ENCODE measurements at regions of chr11 and their contacts with region 1.

Region 1: GRCh38 chr11:6682936-6683861 is at the start of gene MRPL17:
- DNase-seq: peak; percentile 94
- ATAC-seq: peak; percentile 95
- H3K4me3 Mint-ChIP-seq: peak within 1 kb of the TSS; percentile 99
- H3K27ac Mint-ChIP-seq: peak within 1 kb of the TSS; percentile 98
- H3K4me1 Mint-ChIP-seq: peaks cover 24% of the 10 kb centered on the region
- H3K27me3 Mint-ChIP-seq: no peaks in the 10 kb centered on the region
- CTCF ChIP-seq: peak; percentile 73
- total RNA-seq, gene MRPL17: 34.1 and 34.2 TPM in 2 replicates

Region 2: GRCh38 chr11:6389921-6390724 is 293.1 kb before region 1 on chr11 and contains the start of gene SMPD1:
- CTCF ChIA-PET with region 1: no interaction called
- POLR2A ChIA-PET with region 1: interaction called, 11 read pairs
- intact Hi-C with region 1: loop called (anchors 1 kb)
- DNase-seq: peak; percentile 86
- ATAC-seq: peak; percentile 93
- H3K4me3 Mint-ChIP-seq: peak within 1 kb of the TSS; percentile 95
- H3K27ac Mint-ChIP-seq: peak within 1 kb of the TSS; percentile 99
- H3K4me1 Mint-ChIP-seq: peaks cover 36% of the 10 kb centered on the region
- H3K27me3 Mint-ChIP-seq: no peaks in the 10 kb centered on the region
- CTCF ChIP-seq: no peak
- total RNA-seq, gene SMPD1: 14.1 and 16.9 TPM in 2 replicates

Region 3: DNA sequence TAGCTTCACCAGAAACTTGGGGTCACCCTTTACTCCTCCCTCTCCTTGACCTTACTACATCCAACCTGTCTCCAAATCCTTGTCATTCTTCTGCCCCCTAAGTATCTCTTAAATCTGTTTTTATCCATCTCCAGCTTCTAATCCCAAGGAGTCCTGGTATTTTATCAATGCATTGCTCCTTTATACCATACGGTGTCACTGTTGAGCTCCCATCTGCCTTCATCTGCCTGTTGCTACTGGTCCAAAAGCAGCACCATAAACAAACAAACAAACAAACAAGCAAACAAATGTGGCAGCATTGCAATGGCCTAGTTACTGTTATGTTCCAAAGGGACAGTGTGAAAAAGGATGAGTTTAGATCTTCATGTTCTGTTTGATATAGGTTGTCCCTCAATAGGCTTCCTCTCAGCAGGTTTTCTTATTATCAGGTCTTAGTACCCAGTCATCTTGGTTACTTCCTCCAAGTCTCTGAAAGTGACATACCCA is 151.9 kb before region 1 on chr11:
- CTCF ChIA-PET with region 1: interaction called, 53 read pairs
- POLR2A ChIA-PET with region 1: interaction called, 4 read pairs
- intact Hi-C with region 1: loop called (anchors 1 kb)
- DNase-seq: no peak
- ATAC-seq: peak; percentile 60
- H3K4me3 Mint-ChIP-seq: no peak overlapping the region
- H3K27ac Mint-ChIP-seq: no peak overlapping the region
- H3K4me1 Mint-ChIP-seq: peaks cover 6% of the 10 kb centered on the region
- H3K27me3 Mint-ChIP-seq: no peaks in the 10 kb centered on the region
- CTCF ChIP-seq: peak; percentile 35

Region 4: DNA sequence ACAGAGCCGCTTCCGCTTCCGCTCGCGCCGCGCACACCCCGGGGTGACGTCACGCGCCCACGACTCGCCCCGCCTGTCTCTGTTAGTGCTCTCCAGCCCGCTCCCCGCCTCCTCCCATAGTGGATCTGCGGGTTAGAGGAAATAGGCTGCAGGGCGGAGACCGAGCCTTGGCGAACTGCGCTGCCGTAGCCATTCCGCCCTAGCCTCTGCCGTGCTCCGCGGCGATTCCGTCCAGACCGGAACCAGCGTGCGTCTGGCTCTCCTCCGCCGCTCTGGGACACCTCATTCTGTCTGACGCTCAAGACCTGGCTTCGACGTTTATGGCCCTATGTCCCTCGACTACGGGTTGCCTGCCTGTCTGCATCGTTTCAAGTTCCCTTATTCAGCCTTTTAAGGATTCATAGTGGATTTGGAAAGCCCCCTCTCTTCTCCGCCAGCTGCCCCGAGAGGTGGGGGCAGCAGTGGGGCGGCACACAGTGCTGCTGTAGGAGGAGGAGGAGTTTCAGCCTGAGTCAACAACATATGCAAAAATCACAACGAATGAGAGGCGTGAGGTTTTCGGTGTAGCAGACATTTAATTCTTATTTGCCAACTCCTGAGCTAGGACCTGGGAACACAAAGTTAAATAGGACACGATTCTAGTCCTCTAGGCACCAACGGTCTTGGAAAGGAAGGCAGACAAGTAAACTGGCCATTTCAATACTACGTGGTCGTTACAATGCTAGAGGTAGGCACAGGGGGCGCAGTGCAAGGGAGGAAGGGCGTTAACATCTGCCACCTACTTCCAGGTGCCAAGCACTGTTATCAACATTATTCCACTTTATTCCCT is 70.8 kb before region 1 on chr11 and contains the start of gene TAF10:
- CTCF ChIA-PET with region 1: interaction called, 11 read pairs
- POLR2A ChIA-PET with region 1: interaction called, 38 read pairs
- intact Hi-C with region 1: loop called (anchors 1 kb)
- DNase-seq: peak; percentile 92
- ATAC-seq: peak; percentile 83
- H3K4me3 Mint-ChIP-seq: peak within 1 kb of the TSS; percentile 85
- H3K27ac Mint-ChIP-seq: peak within 1 kb of the TSS; percentile 85
- H3K4me1 Mint-ChIP-seq: peaks cover 29% of the 10 kb centered on the region
- H3K27me3 Mint-ChIP-seq: no peaks in the 10 kb centered on the region
- CTCF ChIP-seq: no peak
- total RNA-seq, gene TAF10: 149 and 154 TPM in 2 replicates

Region 5: GRCh38 chr11:6646918-6647679 is 36.1 kb before region 1 on chr11:
- CTCF ChIA-PET with region 1: interaction called, 3 read pairs
- POLR2A ChIA-PET with region 1: interaction called, 4 read pairs
- intact Hi-C with region 1: loop called (anchors 5 kb)
- DNase-seq: peak; percentile 35
- ATAC-seq: peak; percentile 90
- H3K4me3 Mint-ChIP-seq: no peak overlapping the region
- H3K27ac Mint-ChIP-seq: no peak overlapping the region
- H3K4me1 Mint-ChIP-seq: no peaks in the 10 kb centered on the region
- H3K27me3 Mint-ChIP-seq: no peaks in the 10 kb centered on the region
- CTCF ChIP-seq: no peak

Region 6: DNA sequence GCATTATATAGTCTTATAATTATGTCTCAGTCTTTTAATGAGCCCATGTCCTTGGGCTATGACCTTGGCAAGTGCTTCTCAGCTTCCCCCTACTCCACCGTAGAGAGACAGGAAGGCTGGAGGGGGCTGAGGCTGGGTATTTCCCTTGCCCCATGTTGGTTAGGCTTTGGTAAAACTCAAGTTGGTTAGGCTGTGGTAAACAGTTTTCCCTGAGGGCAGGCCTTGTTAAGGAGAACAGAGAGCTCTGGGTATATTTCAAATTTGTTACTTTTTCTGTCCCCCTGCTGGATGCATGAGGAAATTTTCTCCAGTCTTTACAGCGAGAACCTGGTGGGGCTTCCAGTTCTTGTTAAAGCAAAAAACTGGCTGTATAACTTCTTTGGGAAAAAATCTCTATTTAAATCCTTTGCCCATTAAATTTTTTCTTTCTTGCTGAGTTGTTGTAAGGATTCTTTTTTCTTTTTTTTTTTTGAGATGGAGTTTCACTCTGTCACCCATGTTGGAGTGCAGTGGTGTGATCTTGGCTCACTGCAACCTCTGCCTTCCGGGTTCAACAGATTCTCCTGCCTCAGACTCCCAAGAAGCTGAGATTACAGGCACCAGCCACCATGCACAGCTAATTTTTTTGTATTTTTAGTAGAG is 15.3 kb before region 1 on chr11:
- CTCF ChIA-PET with region 1: interaction called, 8 read pairs
- POLR2A ChIA-PET with region 1: interaction called, 5 read pairs
- intact Hi-C with region 1: loop called (anchors 1 kb)
- DNase-seq: no peak
- ATAC-seq: peak; percentile 83
- H3K4me3 Mint-ChIP-seq: no peak overlapping the region
- H3K27ac Mint-ChIP-seq: no peak overlapping the region
- H3K4me1 Mint-ChIP-seq: peaks cover 4% of the 10 kb centered on the region
- H3K27me3 Mint-ChIP-seq: peaks cover 2% of the 10 kb centered on the region
- CTCF ChIP-seq: no peak

Measured in activated B cell treated with CpG ODN at 0.5 μM for 24 hours (primary cell).